ENCODE measurements at regions of chr1 and their contacts with region 1.

Region 1: DNA sequence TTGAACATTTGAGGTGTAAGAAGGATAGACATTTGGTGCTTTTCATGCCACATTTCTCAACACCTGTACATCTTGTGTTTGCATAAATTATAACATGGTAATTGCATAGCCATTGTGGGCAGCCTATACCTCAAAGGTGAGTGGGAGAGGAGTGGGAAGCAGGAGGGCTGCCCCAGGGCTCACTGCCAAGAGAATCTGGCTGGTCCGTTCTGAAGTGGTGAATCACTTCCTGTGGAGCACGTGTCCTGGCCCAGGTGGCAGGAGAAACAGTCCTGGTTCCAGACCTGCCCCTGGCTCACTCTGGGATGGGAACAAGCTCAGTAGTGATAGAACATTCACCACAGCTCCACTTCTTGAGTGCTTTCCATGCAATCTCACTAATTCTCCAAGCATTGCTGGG is 11.6 kb upstream of the OLFML2B start:
- DNase-seq: no peak
- ATAC-seq: no peak
- H3K4me3 Mint-ChIP-seq: no peak overlapping the region
- H3K27ac Mint-ChIP-seq: no peak overlapping the region
- H3K4me1 Mint-ChIP-seq: peaks cover 2% of the 10 kb centered on the region
- H3K27me3 Mint-ChIP-seq: peaks cover 56% of the 10 kb centered on the region

Region 2: GRCh38 chr1:162023547-162024501 is 11.4 kb before region 1 on chr1 and contains the start of gene OLFML2B:
- CTCF ChIA-PET with region 1: interaction called, 13 read pairs
- DNase-seq: peak; percentile 58
- ATAC-seq: peak; percentile 98
- H3K4me3 Mint-ChIP-seq: peak within 1 kb of the TSS; percentile 73
- H3K27ac Mint-ChIP-seq: no peak within 1 kb of the TSS
- H3K4me1 Mint-ChIP-seq: peaks cover 11% of the 10 kb centered on the region
- H3K27me3 Mint-ChIP-seq: peaks cover 65% of the 10 kb centered on the region
- total RNA-seq, gene OLFML2B: not detected

Region 3: DNA sequence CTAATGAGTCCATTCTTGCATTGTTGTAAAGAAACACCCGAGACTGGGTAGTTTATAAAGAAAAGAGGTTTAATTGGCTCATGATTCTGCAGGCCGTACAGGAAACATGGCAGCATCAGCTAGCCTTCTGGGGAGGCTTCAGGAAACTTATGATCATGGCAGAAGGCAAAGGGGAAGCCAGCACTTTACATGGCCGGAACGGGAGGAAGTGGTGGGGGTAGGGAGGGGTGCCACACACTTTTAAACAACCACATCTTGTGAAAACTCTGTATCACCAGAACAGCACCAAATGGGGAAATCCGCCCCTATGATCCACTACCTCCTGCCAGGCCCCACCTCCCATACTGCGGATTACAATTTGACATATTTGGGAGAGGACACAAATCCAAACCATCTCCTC is 78.2 kb after region 1 on chr1:
- CTCF ChIA-PET with region 1: no interaction called
- DNase-seq: no peak
- ATAC-seq: no peak
- H3K4me3 Mint-ChIP-seq: no peak overlapping the region
- H3K27ac Mint-ChIP-seq: no peak overlapping the region
- H3K4me1 Mint-ChIP-seq: peaks cover 1% of the 10 kb centered on the region
- H3K27me3 Mint-ChIP-seq: peaks cover 28% of the 10 kb centered on the region

Region 4: GRCh38 chr1:162248854-162249535 is 213.8 kb after region 1 on chr1:
- CTCF ChIA-PET with region 1: no interaction called
- DNase-seq: no peak
- ATAC-seq: no peak
- H3K4me3 Mint-ChIP-seq: no peak overlapping the region
- H3K27ac Mint-ChIP-seq: no peak overlapping the region
- H3K4me1 Mint-ChIP-seq: no peaks in the 10 kb centered on the region
- H3K27me3 Mint-ChIP-seq: peaks cover 8% of the 10 kb centered on the region